ENCODE measurements at regions of chr6 and their contacts with region 1.

Region 1: DNA sequence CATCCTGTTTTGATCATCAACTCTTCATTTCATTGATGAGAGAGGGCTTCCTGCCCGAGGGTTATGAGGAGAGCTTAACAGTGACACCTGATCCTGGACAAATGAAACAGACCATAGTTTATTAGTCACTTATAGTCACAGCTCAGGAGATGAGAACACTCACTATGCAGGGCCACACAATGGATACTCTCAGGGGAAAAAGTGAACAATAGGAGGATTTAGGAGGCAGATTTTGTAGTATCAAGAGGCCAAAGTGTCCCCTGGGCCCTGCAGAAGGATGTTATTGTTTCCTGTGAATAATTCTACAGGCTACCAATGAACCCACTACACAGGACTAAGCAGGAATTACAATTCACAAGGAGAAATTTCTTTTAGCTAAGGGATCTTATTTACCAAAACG is 772.8 kb upstream of the MAN1A1 start:
- DNase-seq: no peak
- H3K4me3 ChIP-seq: no peak overlapping the region
- H3K27ac ChIP-seq: no peak overlapping the region
- H3K4me1 ChIP-seq: no peaks in the 10 kb centered on the region
- H3K27me3 ChIP-seq: no peaks in the 10 kb centered on the region
- CTCF ChIP-seq: no peak
- POLR2A ChIP-seq: no peak

Region 2: DNA sequence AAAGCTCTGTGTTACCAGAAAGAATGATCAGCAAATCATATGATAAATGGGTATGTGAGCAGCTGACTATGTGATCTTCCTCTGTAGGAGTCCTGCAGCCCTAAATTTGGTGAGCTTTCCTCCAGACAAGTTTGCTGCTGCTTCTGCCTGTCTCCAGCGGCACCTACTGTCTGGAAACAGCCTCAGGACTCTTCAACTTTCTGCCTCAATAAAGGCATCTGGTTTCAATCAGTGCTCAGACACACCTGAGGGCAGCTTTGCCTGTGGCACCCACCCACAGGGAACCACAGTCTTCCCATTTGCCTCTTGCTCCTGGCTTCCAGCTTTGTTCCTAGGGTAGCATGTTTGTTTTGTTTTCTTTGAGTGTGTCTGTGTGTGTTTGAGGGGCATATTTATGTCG is 44.9 kb before region 1 on chr6:
- intact Hi-C with region 1: loop called (anchors 2 kb)
- DNase-seq: no peak
- H3K4me3 ChIP-seq: no peak overlapping the region
- H3K27ac ChIP-seq: no peak overlapping the region
- H3K4me1 ChIP-seq: no peaks in the 10 kb centered on the region
- H3K27me3 ChIP-seq: no peaks in the 10 kb centered on the region
- CTCF ChIP-seq: no peak
- POLR2A ChIP-seq: no peak

Measured in breast epithelium (tissue), 4 donors.